Body of pancreas (tissue), 4 donors: ENCODE measurements at regions of chr22 and their contacts with region 1.

Region 1: GRCh38 chr22:43275545-43275981 is 67.6 kb downstream of the SCUBE1 start:
- DNase-seq: no peak
- ATAC-seq: no peak
- H3K4me3 ChIP-seq: no peak overlapping the region
- H3K27ac ChIP-seq: no peak overlapping the region
- H3K4me1 ChIP-seq: no peaks in the 10 kb centered on the region
- H3K27me3 ChIP-seq: no peaks in the 10 kb centered on the region
- CTCF ChIP-seq: no peak
- POLR2A ChIP-seq: no peak

Region 2: DNA sequence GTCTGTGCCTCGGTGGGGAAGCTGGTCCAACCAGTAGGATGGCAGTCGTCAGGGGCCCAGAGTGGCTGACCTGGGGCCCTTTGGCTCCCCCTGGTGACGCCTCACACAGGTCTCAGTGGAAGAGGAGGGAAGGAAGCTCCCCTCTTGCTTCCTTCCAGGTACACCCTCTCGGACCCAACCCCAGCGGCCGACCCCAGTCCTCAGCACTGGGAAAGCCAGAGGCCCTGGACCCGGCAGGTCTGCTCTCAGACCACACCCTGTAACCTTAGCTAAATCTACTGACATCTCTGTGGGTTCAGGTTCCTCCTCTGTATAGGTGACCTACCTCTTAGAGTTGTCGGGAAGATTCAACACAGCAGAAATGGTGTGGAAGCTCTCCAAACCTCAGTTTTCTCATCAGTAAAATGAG is 71.0 kb after region 1 on chr22:
- intact Hi-C with region 1: no loop called
- DNase-seq: peak; percentile 45 to 71 (median 49)
- ATAC-seq: no peak
- H3K4me3 ChIP-seq: no peak overlapping the region
- H3K27ac ChIP-seq: no peak overlapping the region
- H3K4me1 ChIP-seq: peaks cover 4% of the 10 kb centered on the region
- H3K27me3 ChIP-seq: peaks cover 0 to 7% of the 10 kb centered on the region in 2 donors
- CTCF ChIP-seq: peak; percentile 18 to 59 (median 42)
- POLR2A ChIP-seq: no peak

Region 3: DNA sequence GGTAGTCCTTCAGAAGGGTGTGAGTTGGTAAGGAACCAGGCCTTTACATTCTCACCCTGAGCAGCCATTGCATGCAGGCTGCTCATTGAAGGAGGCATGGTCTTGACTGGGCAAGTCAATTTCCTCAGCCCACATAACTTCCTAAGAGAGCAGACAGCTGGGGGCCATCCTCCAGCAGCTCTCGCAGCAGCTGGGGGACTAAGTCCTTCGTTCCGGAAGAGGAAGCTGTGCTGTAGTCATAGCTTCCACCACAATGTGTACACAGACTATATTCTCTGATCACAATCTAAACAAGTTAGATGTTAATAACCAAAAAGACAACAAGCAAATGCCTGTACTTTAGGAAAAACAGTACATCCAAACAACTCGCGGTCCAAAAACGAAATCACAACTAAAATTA is 106.1 kb after region 1 on chr22:
- intact Hi-C with region 1: loop called (anchors 5 kb)
- DNase-seq: no peak
- ATAC-seq: no peak
- H3K4me3 ChIP-seq: no peak overlapping the region
- H3K27ac ChIP-seq: no peak overlapping the region
- H3K4me1 ChIP-seq: peaks cover 28% of the 10 kb centered on the region
- H3K27me3 ChIP-seq: peaks cover 0 to 2% of the 10 kb centered on the region in 2 donors
- CTCF ChIP-seq: no peak
- POLR2A ChIP-seq: no peak